ENCODE measurements at regions of chr1 and their contacts with region 1.

Region 1: DNA sequence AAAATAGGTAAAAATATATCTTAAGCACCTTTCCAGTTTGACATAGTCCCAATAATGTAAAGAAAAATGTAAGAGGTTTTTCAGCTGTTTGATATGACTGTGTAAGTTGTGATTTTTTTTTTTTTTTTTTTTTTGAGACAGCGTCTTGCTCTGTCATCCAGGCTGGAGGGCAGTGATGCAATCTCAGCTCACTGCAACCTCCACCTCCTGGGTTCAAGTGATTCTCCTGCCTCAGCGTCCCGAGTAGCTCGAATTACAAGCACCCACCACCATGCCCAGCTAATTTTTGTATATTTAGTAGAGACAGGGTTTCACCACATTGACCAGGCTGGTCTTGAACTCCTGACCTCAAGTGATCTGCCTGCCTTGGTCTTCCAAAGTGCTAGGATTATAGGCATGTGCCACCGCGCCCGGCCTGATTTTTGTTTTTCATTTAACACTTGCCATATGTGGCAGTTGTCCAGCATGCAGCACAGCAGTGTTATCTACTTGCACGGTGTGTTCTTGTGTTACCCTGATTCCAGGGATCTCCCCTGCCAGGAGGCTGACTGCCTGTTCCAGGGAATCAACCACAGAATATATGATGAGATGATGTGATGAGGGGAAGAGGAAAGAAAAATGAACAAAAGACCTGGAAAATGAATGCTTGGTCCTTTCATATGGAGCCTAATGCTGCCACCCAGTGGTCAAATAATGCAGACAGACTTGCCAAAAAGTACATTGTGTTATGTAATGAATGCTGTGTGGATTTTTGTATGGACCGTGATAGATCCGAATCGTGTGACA is 79.0 kb downstream of the RAVER2 start:
- DNase-seq: peak; percentile 83
- H3K4me3 Mint-ChIP-seq: no peak overlapping the region
- H3K27ac Mint-ChIP-seq: peak overlapping the region; percentile 5
- H3K4me1 Mint-ChIP-seq: peaks cover 33% of the 10 kb centered on the region
- H3K27me3 Mint-ChIP-seq: no peaks in the 10 kb centered on the region

Region 2: DNA sequence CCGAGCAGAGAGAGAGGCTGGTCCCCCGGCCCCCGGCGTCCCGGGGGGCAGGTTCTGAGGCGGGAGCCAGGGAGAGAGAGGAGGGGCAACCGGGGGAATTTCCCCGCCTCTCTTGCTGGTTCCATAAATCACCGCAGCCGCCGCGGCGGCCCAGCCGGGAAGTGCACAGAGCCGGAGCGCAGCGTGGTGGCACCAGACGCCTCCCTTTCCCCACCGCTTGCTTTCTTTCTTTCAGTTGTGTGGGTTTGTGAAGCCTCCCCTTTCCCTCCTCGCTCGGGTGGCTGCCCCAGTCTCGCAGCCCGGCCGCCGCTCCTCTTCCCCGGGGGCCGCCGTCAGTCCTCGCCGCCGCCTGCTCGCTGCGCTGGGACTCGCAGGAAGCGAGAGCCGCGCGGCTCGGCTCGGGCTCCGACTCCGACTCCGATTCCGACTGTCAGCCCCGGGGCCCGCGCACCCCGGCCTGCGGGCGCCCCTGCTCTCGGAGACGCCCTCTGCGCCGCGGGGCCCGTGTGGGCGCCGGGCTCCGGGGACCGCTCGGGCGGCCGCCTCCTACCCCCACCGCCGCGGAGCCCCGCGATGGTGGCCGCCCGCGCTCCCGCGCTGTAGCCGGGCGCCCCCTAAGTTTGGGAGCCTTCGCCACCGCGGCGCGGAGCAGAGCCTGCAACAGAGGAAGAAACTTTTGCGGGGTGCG is 353.8 kb before region 1 on chr1 and contains the start of gene CACHD1:
- CTCF ChIA-PET with region 1: no interaction called
- intact Hi-C with region 1: loop called (anchors 1 kb)
- DNase-seq: peak; percentile 86
- H3K4me3 Mint-ChIP-seq: peak within 1 kb of the TSS; percentile 78
- H3K27ac Mint-ChIP-seq: peak within 1 kb of the TSS; percentile 3
- H3K4me1 Mint-ChIP-seq: peaks cover 14% of the 10 kb centered on the region
- H3K27me3 Mint-ChIP-seq: peaks cover 27% of the 10 kb centered on the region
- total RNA-seq, gene CACHD1: 2.6 to 2.9 TPM

Region 3: GRCh38 chr1:64624218-64624713 is 199.6 kb before region 1 on chr1:
- CTCF ChIA-PET with region 1: no interaction called
- intact Hi-C with region 1: no loop called
- DNase-seq: peak; percentile 23
- H3K4me3 Mint-ChIP-seq: no peak overlapping the region
- H3K27ac Mint-ChIP-seq: no peak overlapping the region
- H3K4me1 Mint-ChIP-seq: peaks cover 6% of the 10 kb centered on the region
- H3K27me3 Mint-ChIP-seq: no peaks in the 10 kb centered on the region

Region 4: DNA sequence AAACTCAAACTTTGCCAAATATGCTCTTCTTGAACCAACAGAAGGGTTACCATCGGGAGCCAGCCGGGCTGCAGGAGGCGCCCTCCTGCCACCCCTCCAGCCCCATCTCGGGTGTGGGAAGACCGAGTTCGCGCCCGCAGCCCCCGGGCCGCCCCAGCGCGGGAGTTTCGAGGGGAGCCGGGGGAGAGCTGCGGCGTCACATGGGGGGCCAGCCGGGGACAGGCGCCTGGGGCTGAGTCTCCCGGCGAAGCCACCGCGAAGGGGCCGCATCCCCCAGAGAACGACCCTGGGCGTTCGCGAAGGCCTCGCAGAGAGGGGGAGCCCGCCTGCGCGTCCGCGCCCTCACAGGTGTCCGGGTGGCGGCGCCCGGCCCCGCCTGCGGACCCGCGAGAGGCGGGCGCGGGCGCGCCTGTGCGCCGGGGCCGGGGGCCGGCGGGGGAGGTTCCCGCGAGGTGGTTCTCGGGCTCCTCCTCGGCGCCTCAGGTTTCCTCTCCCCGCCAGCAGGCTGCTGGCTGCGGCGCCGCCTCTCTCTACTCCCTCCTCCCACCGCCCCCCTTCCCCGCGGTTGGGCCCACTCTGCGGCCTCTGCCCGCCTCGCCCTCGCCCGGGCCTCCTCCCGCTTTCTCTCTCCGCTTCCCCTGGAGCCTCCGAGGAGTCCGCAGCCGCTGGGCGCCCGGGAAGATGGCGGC is 79.2 kb before region 1 on chr1 and contains the start of gene RAVER2:
- CTCF ChIA-PET with region 1: interaction called, 6 read pairs
- intact Hi-C with region 1: loop called (anchors 1 kb)
- DNase-seq: peak; percentile 78
- H3K4me3 Mint-ChIP-seq: peak within 1 kb of the TSS; percentile 80
- H3K27ac Mint-ChIP-seq: peak within 1 kb of the TSS; percentile 36
- H3K4me1 Mint-ChIP-seq: peaks cover 7% of the 10 kb centered on the region
- H3K27me3 Mint-ChIP-seq: peaks cover 3% of the 10 kb centered on the region
- total RNA-seq, gene RAVER2: 2.3 to 2.5 TPM

Region 5: GRCh38 chr1:64923294-64923721 is 99.4 kb after region 1 on chr1:
- CTCF ChIA-PET with region 1: interaction called, 3 read pairs
- intact Hi-C with region 1: loop called (anchors 1 kb)
- DNase-seq: peak; percentile 72
- H3K4me3 Mint-ChIP-seq: peak overlapping the region; percentile 25
- H3K27ac Mint-ChIP-seq: peak overlapping the region; percentile 87
- H3K4me1 Mint-ChIP-seq: peaks cover 96% of the 10 kb centered on the region
- H3K27me3 Mint-ChIP-seq: no peaks in the 10 kb centered on the region

Region 6: GRCh38 chr1:65036545-65037180 is 212.8 kb after region 1 on chr1:
- CTCF ChIA-PET with region 1: interaction called, 5 read pairs
- intact Hi-C with region 1: loop called (anchors 1 kb)
- DNase-seq: no peak
- H3K4me3 Mint-ChIP-seq: no peak overlapping the region
- H3K27ac Mint-ChIP-seq: no peak overlapping the region
- H3K4me1 Mint-ChIP-seq: peaks cover 11% of the 10 kb centered on the region
- H3K27me3 Mint-ChIP-seq: no peaks in the 10 kb centered on the region

Region 7: DNA sequence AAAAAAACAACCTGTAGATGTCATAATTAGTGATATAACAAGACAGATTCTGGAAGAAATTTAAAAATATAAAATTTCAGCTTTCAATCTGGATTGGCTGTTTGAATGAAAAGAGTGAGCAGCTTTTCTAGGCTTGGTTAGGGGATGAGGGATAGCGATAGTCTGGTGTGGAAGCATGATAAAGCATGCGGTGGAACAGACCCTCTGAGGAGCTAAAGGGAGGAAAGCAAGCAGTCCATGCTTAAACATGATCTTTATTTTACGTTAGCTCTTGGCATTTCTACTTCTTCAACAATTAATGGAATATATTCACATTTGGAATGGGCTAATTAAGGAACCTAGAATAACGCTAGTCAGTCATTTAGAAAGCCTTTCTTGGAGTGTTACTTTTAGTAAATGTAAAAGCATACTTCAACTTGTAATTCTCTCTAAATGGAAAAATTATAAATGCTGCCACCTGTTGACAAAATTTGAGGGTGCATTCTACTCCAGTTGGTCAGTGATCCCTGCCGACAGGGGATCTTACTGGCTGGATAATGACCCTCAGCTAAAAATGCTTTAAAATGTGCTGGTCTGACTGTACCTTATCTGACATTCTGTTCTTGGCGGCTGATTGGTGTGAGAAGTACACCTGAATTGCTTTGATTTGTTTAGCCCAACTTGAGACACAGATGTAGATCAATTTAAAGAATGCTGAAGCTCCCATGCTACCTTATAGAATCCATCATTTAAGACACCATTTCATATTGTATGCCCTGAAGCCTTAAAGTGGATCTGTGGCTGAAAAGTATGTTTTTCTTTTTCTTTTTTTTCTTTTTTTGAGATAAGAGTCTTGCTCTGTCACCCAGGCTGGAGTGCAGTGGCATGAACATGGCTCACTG is 385.4 kb after region 1 on chr1:
- CTCF ChIA-PET with region 1: no interaction called
- intact Hi-C with region 1: loop called (anchors 5 kb)
- DNase-seq: peak; percentile 28
- H3K4me3 Mint-ChIP-seq: no peak overlapping the region
- H3K27ac Mint-ChIP-seq: no peak overlapping the region
- H3K4me1 Mint-ChIP-seq: peaks cover 23% of the 10 kb centered on the region
- H3K27me3 Mint-ChIP-seq: peaks cover 3% of the 10 kb centered on the region